CD8-positive, alpha-beta T cell (primary cell): ENCODE measurements at regions of chr18 and their contacts with region 1.

Region 1: DNA sequence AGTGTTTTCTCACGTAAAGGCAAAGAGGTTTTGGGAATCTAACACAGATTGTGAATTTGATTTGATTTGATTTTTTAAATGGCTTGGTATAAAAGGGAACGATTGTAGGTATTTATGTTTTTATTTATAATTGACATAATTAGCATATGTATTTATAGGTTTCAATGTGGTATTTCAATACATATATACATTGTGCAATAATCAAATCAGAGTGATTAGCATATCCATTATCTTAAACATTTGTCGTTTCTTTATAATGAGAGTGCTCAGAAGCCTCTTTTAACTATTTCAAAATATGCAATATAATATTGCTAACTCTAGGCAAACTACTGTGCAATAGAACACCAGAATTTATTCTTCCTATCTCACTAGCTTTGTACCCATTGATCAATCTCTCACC is 35.1 kb upstream of the CDH2 start:
- DNase-seq: no peak
- ATAC-seq: no peak
- H3K4me3 ChIP-seq: no peak overlapping the region
- H3K4me3 Mint-ChIP-seq: no peak overlapping the region
- H3K27ac ChIP-seq: no peak overlapping the region
- H3K27ac Mint-ChIP-seq: no peak overlapping the region
- H3K4me1 ChIP-seq: no peaks in the 10 kb centered on the region
- H3K4me1 Mint-ChIP-seq: no peaks in the 10 kb centered on the region
- H3K27me3 ChIP-seq: no peaks in the 10 kb centered on the region
- H3K27me3 Mint-ChIP-seq: no peaks in the 10 kb centered on the region
- CTCF ChIP-seq: no peak

Region 2: GRCh38 chr18:28174181-28174905 is 37.7 kb before region 1 on chr18:
- CTCF ChIA-PET with region 1: no interaction called
- POLR2A ChIA-PET with region 1: no interaction called
- intact Hi-C with region 1: loop called in 1 of 2 experiments (anchors 5 kb)
- DNase-seq: no peak
- ATAC-seq: no peak
- H3K4me3 ChIP-seq: no peak overlapping the region
- H3K4me3 Mint-ChIP-seq: no peak overlapping the region
- H3K27ac ChIP-seq: no peak overlapping the region
- H3K27ac Mint-ChIP-seq: no peak overlapping the region
- H3K4me1 ChIP-seq: no peaks in the 10 kb centered on the region
- H3K4me1 Mint-ChIP-seq: peaks cover 14% of the 10 kb centered on the region
- H3K27me3 ChIP-seq: peaks cover 0 to 4% of the 10 kb centered on the region in 2 experiments
- H3K27me3 Mint-ChIP-seq: peaks cover 29% of the 10 kb centered on the region
- CTCF ChIP-seq: no peak

Region 3: GRCh38 chr18:28198620-28199019 is 13.4 kb before region 1 on chr18:
- CTCF ChIA-PET with region 1: no interaction called
- POLR2A ChIA-PET with region 1: no interaction called
- intact Hi-C with region 1: no loop called
- DNase-seq: no peak
- ATAC-seq: no peak
- H3K4me3 ChIP-seq: no peak overlapping the region
- H3K4me3 Mint-ChIP-seq: no peak overlapping the region
- H3K27ac ChIP-seq: no peak overlapping the region
- H3K27ac Mint-ChIP-seq: no peak overlapping the region
- H3K4me1 ChIP-seq: no peaks in the 10 kb centered on the region
- H3K4me1 Mint-ChIP-seq: no peaks in the 10 kb centered on the region
- H3K27me3 ChIP-seq: no peaks in the 10 kb centered on the region
- H3K27me3 Mint-ChIP-seq: no peaks in the 10 kb centered on the region
- CTCF ChIP-seq: no peak